Activated CD8-positive, alpha-beta T cell treated with anti-CD3 and anti-CD28 coated beads, Interleukin-2, amount 10 ng/mL, durations not matched to agents 7 days and 5 days (primary cell): ENCODE measurements at regions of chr3 and their contacts with region 1.

Region 1: DNA sequence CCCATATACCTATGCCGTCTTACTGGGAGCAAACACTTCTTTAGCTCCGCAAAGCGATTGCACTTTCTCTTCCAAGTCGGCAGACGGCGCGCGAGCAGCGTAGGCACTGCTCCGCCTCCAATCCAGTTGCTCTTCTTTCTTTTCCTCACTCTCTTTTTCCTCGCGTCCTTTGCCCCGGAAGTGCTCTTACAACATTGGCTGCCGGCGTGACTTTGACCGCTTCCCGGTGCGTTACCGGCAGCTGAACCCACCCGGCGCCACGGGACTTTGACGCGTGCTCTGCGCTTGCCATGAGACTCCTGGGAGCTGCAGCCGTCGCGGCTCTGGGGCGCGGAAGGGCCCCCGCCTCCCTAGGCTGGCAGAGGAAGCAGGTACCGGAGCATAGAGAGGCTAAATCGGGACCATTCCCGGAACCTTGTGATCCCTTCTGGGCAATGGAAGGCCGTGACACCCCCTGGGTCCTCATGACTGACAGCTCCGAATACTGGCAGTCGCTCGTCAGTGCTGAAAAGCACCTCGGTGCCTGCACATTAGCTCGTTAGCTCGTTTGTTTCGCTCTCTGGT is at the start of gene GFM1:
- DNase-seq: peak; percentile 93
- ATAC-seq: peak; percentile 94
- H3K4me3 Mint-ChIP-seq: peak within 1 kb of the TSS; percentile 97
- H3K27ac Mint-ChIP-seq: peak within 1 kb of the TSS; percentile 93
- H3K4me1 Mint-ChIP-seq: peaks cover 29% of the 10 kb centered on the region
- H3K27me3 Mint-ChIP-seq: no peaks in the 10 kb centered on the region
- total RNA-seq, gene GFM1: 40.4 to 45.0 TPM

Region 2: GRCh38 chr3:158539414-158540014 is 104.9 kb before region 1 on chr3:
- CTCF ChIA-PET with region 1: interaction called, 13 read pairs
- POLR2A ChIA-PET with region 1: no interaction called
- DNase-seq: peak; percentile 61
- ATAC-seq: peak; percentile 49
- H3K4me3 Mint-ChIP-seq: no peak overlapping the region
- H3K27ac Mint-ChIP-seq: no peak overlapping the region
- H3K4me1 Mint-ChIP-seq: no peaks in the 10 kb centered on the region
- H3K27me3 Mint-ChIP-seq: no peaks in the 10 kb centered on the region

Region 3: DNA sequence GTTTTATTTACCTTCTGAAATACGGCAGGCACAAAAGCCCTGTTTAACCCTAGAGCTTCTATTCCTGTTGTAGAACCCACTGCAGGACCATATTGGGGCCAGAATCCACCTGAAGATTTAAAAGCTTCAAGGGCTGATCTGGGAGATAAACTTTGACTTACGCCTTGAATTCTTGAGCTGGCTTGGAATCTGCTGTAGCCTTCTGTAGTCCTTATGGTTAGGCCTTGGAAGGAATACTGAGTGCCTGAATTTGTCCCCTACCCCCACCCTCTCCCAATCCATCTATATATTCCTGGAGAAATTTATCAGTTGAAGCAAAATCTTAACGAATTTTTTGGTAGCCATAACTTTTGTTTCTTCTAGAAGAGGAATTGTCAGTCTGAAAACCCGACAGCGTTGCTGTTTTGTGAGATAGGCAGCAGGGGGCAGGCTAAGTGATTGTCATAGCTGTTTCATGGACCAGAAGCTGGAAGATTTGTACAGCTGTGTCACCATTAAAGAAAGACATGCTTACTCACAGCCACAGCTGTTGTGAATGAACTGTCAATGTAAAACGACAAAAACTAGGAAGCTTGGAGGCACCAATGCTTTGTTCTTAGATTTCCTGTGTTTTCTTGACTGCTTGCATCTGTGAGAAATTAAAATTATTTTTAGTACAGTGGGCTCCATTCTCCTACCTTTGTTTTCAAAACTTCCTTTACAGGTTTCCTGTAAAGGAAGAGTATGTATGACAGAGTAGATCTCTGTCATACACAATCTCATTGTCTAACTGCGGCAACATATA is 15.2 kb after region 1 on chr3:
- CTCF ChIA-PET with region 1: interaction called, 105 read pairs
- POLR2A ChIA-PET with region 1: interaction called, 9 read pairs
- DNase-seq: peak; percentile 73
- ATAC-seq: peak; percentile 67
- H3K4me3 Mint-ChIP-seq: no peak overlapping the region
- H3K27ac Mint-ChIP-seq: no peak overlapping the region
- H3K4me1 Mint-ChIP-seq: peaks cover 11% of the 10 kb centered on the region
- H3K27me3 Mint-ChIP-seq: no peaks in the 10 kb centered on the region

Region 4: DNA sequence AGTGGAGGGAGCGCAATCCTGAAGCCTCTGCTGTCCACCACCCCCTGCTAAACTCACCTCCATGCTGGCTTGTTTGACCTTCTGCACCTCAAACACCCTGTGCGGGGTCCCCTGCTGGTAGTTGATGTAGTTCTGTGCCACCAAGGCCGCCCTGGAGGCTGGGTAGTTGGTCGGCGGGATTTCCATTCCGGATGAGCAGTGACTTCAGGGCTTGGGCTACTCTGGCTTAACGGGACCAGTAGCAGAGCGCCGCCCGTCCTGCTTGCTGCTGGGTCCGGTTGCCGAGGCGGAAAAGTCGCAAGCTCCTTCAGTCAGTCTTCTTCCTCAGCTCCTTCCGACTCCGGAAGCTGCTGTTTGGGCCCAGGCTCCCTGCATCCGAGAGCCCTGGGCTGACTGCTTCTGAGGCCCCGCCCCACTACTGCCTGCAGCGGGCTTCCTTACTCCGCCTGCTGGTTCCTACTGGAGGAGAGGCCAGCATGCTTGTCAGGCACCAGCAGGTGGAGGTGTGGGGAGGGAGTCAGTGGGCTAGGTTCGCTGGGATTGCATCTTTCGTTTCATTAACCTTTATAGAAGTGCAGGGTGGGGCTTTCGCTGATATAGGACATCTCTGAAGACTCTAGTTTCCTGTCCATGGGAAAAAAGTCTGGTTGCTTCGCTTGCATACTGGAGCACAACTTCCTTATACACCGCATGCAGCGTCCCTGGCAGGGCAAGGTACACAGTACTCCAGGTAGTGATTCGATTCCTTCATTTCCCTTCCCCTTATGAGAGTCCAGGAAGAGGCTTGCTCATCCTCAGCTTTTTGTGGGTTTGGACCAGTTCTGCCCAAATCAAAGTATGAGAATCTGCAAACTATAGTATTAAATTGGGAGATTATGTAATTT is 28.1 kb after region 1 on chr3 and contains the start of gene LXN:
- CTCF ChIA-PET with region 1: interaction called, 16 read pairs
- POLR2A ChIA-PET with region 1: interaction called, 6 read pairs
- DNase-seq: peak; percentile 87
- ATAC-seq: peak; percentile 100
- H3K4me3 Mint-ChIP-seq: peak within 1 kb of the TSS; percentile 91
- H3K27ac Mint-ChIP-seq: peak within 1 kb of the TSS; percentile 93
- H3K4me1 Mint-ChIP-seq: peaks cover 29% of the 10 kb centered on the region
- H3K27me3 Mint-ChIP-seq: no peaks in the 10 kb centered on the region
- total RNA-seq, gene LXN: 8.7 to 9.4 TPM

Region 5: DNA sequence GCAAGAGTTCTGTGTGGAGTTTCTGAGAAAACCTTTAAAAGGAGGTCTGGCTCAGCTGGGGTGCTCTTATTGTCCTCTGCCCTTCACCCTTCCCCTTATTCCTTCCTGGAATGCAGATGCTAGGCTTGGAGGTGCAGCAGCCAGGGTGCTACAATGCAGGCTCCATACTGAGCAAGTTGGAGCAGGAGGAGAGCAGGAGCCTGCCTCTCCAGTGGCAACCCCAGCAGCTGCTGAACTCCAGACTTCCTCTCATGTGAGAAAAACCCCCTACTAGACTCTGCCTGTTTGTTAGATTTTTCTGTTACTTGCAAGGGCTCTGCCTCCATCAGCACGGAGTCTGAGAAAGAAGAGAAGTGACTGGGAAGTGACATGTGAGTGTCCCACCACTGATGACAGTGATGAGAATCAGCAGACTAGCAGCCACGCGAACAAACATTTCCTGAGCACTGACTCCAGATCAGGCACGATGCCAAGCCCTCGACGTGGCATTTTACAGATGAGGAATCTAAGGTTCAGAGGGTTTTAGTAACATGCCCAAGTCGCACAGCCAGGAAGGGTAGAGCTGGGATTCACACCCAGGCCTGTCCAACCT is 103.9 kb after region 1 on chr3:
- CTCF ChIA-PET with region 1: no interaction called
- POLR2A ChIA-PET with region 1: no interaction called
- DNase-seq: no peak
- ATAC-seq: no peak
- H3K4me3 Mint-ChIP-seq: no peak overlapping the region
- H3K27ac Mint-ChIP-seq: no peak overlapping the region
- H3K4me1 Mint-ChIP-seq: no peaks in the 10 kb centered on the region
- H3K27me3 Mint-ChIP-seq: no peaks in the 10 kb centered on the region